AG04450 (cell line): ENCODE measurements at regions of chrX and their contacts with region 1.

Region 1: DNA sequence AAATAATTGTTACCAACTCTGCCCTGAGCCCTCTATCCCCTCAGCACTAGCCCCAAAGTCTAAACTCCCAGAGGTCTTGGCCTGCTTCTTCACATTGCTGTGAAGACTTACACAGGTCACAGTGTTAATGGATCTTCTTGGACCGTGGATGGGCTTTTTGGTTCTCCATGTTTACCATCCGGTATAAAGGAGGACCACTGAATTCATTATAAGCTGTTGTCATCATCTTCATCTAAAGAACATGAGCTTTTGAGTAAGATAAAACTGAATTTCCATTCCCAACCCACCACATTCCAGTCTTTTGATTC is 8.5 kb downstream of the NUDT11 start:
- DNase-seq: no peak
- H3K4me3 ChIP-seq: no peak overlapping the region
- H3K27ac ChIP-seq: no peak overlapping the region
- H3K27me3 ChIP-seq: no peaks in the 10 kb centered on the region
- CTCF ChIP-seq: no peak

Region 2: GRCh38 chrX:51461053-51462044 is 26.6 kb before region 1 on chrX:
- CTCF ChIA-PET with region 1: interaction called, 17 read pairs
- POLR2A ChIA-PET with region 1: no interaction called
- DNase-seq: peak; percentile 2
- H3K4me3 ChIP-seq: no peak overlapping the region
- H3K27ac ChIP-seq: no peak overlapping the region
- H3K27me3 ChIP-seq: peaks cover 2% of the 10 kb centered on the region
- CTCF ChIP-seq: peak; percentile 68

Region 3: DNA sequence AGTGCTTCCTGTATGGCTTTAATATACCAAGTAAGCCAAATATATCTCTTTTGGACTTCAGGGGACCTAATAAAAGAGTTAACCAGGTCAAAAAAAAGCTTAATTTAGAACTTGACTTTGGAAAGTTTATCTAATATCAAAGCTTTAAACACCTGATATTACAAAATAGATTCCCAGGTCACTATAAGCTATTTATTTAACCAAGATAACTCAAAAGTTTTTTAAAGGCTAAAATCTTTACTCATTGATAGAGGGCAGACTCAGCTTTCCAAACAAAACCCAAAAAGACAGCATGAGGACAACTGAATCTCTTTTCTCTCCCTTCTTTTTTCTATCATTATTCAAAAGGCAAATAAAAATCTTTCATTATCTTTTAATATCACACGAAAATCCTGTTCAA is 11.0 kb before region 1 on chrX:
- CTCF ChIA-PET with region 1: interaction called, 30 read pairs
- POLR2A ChIA-PET with region 1: no interaction called
- DNase-seq: no peak
- H3K4me3 ChIP-seq: no peak overlapping the region
- H3K27ac ChIP-seq: no peak overlapping the region
- H3K27me3 ChIP-seq: no peaks in the 10 kb centered on the region
- CTCF ChIP-seq: no peak

Region 4: DNA sequence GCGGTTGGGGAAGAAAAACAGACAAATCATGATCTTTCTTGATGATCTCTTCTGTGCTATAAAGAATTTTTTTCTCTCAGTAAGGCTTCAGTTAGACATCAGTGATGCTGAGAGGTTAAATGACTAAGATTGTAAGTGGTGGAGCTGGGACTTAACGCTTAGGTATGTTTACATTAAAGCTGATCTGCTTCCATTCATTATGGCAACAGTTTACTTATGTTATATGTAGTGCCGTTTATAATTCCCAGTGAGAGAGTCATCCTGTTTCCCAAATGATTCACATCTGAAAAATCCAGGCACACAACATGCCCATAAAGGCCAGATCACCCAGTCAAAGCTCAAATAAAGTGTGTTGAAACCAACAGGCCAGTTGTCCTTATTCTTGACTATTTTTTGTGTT is 80.7 kb after region 1 on chrX:
- CTCF ChIA-PET with region 1: interaction called, 14 read pairs
- POLR2A ChIA-PET with region 1: no interaction called
- DNase-seq: peak; percentile 67
- H3K4me3 ChIP-seq: no peak overlapping the region
- H3K27ac ChIP-seq: peak overlapping the region; percentile 52
- H3K27me3 ChIP-seq: no peaks in the 10 kb centered on the region
- CTCF ChIP-seq: no peak

Region 5: DNA sequence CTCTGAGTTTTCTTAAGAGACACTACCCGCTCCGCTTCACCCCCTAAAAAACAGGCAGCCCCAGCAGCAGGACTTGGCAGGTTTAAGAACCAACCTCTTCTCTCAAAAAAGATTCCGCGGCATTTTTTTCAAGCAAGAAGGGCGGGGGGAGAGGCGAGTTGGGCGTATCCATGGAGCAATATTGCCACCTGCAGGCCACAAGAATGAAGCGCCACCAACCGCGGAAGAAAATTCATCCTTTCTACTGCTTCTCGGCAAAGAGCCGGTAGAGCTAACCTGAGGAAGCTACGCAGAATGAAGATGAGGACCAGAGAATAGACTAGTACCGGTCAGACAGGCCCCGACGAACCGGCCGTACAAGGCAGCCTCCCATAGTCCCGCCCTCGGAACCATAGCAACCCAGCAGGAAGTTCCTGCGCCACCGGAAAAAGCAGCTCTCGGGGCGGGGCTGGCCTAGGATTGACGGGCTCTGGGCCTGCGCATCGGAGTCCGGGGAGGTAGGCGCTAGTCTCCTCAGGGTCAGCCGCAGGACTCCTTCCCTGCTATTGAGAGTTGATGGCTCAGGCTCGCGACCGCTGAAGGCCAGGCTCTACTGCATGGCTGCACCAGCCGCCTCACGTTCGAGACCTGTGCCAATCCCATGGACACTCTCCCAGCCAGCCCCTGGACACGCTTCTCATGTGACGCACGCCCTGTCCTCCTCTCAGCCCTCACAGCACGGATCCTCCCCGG is 773.7 kb after region 1 on chrX:
- CTCF ChIA-PET with region 1: interaction called, 14 read pairs
- POLR2A ChIA-PET with region 1: no interaction called
- DNase-seq: peak; percentile 61
- H3K4me3 ChIP-seq: peak overlapping the region; percentile 71
- H3K27ac ChIP-seq: peak overlapping the region; percentile 85
- H3K27me3 ChIP-seq: no peaks in the 10 kb centered on the region
- CTCF ChIP-seq: peak; percentile 80